CD8-positive, alpha-beta T cell (primary cell): ENCODE measurements at regions of chr7 and their contacts with region 1.

Region 1: GRCh38 chr7:92652536-92652935 is 62.3 kb upstream of the FAM133B start:
- DNase-seq: no peak
- ATAC-seq: no peak
- H3K4me3 ChIP-seq: no peak overlapping the region
- H3K4me3 Mint-ChIP-seq: no peak overlapping the region
- H3K27ac ChIP-seq: no peak overlapping the region
- H3K27ac Mint-ChIP-seq: no peak overlapping the region
- H3K4me1 ChIP-seq: no peaks in the 10 kb centered on the region
- H3K4me1 Mint-ChIP-seq: peaks cover 12% of the 10 kb centered on the region
- H3K27me3 ChIP-seq: no peaks in the 10 kb centered on the region
- H3K27me3 Mint-ChIP-seq: no peaks in the 10 kb centered on the region
- CTCF ChIP-seq: no peak

Region 2: GRCh38 chr7:92633211-92633906 is 19.2 kb before region 1 on chr7:
- CTCF ChIA-PET with region 1: interaction called, 5 read pairs
- POLR2A ChIA-PET with region 1: no interaction called
- intact Hi-C with region 1: loop called in 1 of 2 experiments (anchors 2 kb)
- DNase-seq: peak in 5 of 9 experiments; percentile 16 to 68 (median 30)
- ATAC-seq: peak; percentile 85
- H3K4me3 ChIP-seq: no peak overlapping the region
- H3K4me3 Mint-ChIP-seq: no peak overlapping the region
- H3K27ac ChIP-seq: peak overlapping the region in 1 of 2 experiments; percentile 18
- H3K27ac Mint-ChIP-seq: peak overlapping the region; percentile 6
- H3K4me1 ChIP-seq: peaks cover 7% of the 10 kb centered on the region
- H3K4me1 Mint-ChIP-seq: peaks cover 26% of the 10 kb centered on the region
- H3K27me3 ChIP-seq: no peaks in the 10 kb centered on the region
- H3K27me3 Mint-ChIP-seq: no peaks in the 10 kb centered on the region
- CTCF ChIP-seq: no peak